ENCODE measurements at regions of chr3 and their contacts with region 1.

Region 1: DNA sequence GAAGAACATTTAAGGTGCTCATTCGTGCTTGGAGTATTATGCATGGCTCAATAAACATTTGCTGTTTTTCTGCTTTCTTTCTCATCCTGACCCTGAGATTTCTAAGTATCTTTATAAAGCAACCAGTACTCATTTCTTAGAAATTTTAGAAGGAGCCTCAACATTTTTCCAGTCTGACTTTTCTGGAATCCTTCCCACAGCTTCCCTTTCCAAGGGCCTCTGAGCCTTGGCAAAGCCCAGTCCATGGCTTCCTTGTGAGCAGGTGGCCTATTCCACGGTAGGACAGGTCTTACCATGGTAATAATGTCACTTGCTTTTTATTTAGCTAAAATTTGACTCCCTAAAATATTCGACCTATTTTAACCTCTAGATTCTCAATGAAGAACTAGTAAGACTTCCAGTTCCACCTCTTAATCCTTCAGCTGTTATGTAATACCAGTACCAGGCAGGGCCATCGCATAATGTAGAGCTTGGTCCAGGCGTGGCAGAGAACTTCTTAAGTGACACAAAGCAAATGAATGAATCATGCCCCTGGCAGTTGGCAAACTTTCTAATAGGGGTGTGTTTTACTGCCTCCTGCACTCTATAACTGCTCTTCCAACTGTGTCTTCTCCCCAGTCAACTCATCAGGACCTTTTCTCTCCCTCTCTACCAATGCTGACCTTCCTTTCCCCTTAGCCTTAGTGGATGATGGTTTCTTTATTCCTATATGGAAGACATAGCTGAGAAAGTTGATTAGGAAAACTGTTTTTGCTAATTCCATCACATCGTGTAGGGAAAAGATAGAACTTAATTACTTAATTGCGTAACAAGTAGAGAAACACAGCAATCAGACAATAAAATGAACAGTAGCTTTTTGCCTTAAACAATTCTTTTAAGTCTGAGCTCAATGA is 894 bp upstream of the TM4SF4 start:
- DNase-seq: peak; percentile 74 to 78
- H3K4me3 ChIP-seq: no peak overlapping the region
- H3K27ac ChIP-seq: peak overlapping the region; percentile 22 to 71
- H3K4me1 ChIP-seq: no peaks in the 10 kb centered on the region
- H3K27me3 ChIP-seq: no peaks in the 10 kb centered on the region
- CTCF ChIP-seq: no peak
- POLR2A ChIP-seq: no peak

Region 2: GRCh38 chr3:148229107-148229506 is 1244.5 kb before region 1 on chr3:
- intact Hi-C with region 1: no loop called
- DNase-seq: no peak
- H3K4me3 ChIP-seq: no peak overlapping the region
- H3K27ac ChIP-seq: no peak overlapping the region
- H3K4me1 ChIP-seq: no peaks in the 10 kb centered on the region
- H3K27me3 ChIP-seq: no peaks in the 10 kb centered on the region
- CTCF ChIP-seq: no peak
- POLR2A ChIP-seq: no peak

Region 3: GRCh38 chr3:149377408-149378377 is 95.9 kb before region 1 on chr3 and contains the start of gene TM4SF1:
- intact Hi-C with region 1: loop called (anchors 10 kb)
- DNase-seq: peak; percentile 72 to 86
- H3K4me3 ChIP-seq: peak within 1 kb of the TSS; percentile 36 to 60 (median 59)
- H3K27ac ChIP-seq: peak within 1 kb of the TSS; percentile 85 to 96
- H3K4me1 ChIP-seq: no peaks in the 10 kb centered on the region
- H3K27me3 ChIP-seq: no peaks in the 10 kb centered on the region
- CTCF ChIP-seq: peak; percentile 29 to 59 (median 39)
- POLR2A ChIP-seq: peak; percentile 80
- total RNA-seq, gene TM4SF1: 48.5 to 559 (median 290) TPM

Region 4: GRCh38 chr3:149424918-149425317 is 48.7 kb before region 1 on chr3:
- intact Hi-C with region 1: no loop called
- DNase-seq: no peak
- H3K4me3 ChIP-seq: no peak overlapping the region
- H3K27ac ChIP-seq: no peak overlapping the region
- H3K4me1 ChIP-seq: no peaks in the 10 kb centered on the region
- H3K27me3 ChIP-seq: no peaks in the 10 kb centered on the region
- CTCF ChIP-seq: no peak
- POLR2A ChIP-seq: no peak

Region 5: GRCh38 chr3:149527531-149528339 is 54.1 kb after region 1 on chr3:
- intact Hi-C with region 1: no loop called
- DNase-seq: no peak
- H3K4me3 ChIP-seq: no peak overlapping the region
- H3K27ac ChIP-seq: peak overlapping the region; percentile 26 to 46
- H3K4me1 ChIP-seq: no peaks in the 10 kb centered on the region
- H3K27me3 ChIP-seq: no peaks in the 10 kb centered on the region
- CTCF ChIP-seq: no peak
- POLR2A ChIP-seq: no peak